OCI-LY7 (cell line): ENCODE measurements at regions of chr6 and their contacts with region 1.

Region 1: GRCh38 chr6:15691250-15691869 is 28.5 kb upstream of the DTNBP1 start:
- DNase-seq: peak; percentile 88
- H3K4me3 ChIP-seq: no peak overlapping the region
- H3K27ac ChIP-seq: no peak overlapping the region
- H3K4me1 ChIP-seq: no peaks in the 10 kb centered on the region
- CTCF ChIP-seq: peak; percentile 99

Region 2: DNA sequence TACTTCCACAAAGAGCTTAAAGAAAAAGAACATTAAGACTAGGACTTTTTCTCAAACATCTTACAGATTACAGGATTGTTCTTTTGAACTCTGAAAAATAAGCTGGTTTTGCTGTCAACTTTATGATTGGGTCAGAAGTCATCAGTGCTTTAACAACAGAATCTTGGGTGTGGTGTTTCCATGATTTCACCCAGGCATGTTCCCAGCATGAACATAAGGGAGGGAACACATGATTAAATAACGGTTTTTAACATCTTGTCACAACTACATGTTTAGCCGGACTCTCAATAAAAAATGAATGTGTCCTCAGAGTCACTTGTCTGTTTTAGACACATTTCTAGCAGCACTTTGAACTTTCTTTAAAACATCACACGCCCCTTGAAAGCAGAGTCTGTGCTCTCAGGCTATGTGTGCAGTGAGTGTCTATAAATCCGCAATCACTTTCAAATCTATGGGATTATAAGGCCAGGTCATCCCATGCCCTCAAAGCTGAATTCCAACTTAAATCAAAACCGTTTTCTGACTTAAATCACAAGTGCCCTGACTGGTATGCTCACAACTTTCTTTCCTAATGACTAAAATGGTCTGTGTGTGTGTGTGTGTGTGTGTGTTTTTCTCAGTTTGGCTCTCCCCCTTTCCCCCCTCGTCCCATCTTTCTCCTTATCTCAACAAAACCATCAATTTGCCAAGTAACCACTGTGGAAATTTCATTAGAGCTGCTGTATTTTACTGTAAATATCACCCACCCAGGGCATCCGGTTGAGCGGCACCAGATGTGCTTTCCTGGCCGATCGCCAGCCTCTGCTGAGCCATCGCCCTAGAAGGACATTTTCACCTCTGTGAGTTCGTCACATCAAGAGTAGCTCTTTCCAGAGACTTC is 188.3 kb after region 1 on chr6:
- CTCF ChIA-PET with region 1: no interaction called
- POLR2A ChIA-PET with region 1: no interaction called
- intact Hi-C with region 1: loop called (anchors 10 kb)
- DNase-seq: peak; percentile 31
- H3K4me3 ChIP-seq: no peak overlapping the region
- H3K27ac ChIP-seq: no peak overlapping the region
- H3K4me1 ChIP-seq: peaks cover 8% of the 10 kb centered on the region
- CTCF ChIP-seq: no peak

Region 3: DNA sequence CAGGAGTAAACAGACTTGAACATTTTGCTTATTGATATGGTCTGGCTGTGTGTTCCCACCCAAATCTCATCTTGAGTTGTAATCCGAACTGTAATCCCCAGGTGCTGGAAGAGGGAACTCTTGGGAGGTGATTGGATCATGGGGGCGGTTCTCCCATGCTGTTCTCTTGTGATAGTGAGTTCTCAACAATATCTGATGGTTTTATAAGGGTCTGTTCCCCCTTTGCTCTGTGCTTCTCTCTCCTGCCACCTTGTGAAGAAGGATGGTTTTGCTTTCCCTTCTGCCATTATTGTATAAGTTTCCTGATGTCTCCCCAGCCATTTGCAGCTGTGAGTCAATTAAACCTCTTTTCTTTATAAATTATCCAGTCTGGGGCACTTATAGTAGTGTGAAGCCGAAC is 477.5 kb after region 1 on chr6:
- CTCF ChIA-PET with region 1: no interaction called
- POLR2A ChIA-PET with region 1: no interaction called
- intact Hi-C with region 1: loop called (anchors 5 kb)
- DNase-seq: peak; percentile 48
- H3K4me3 ChIP-seq: no peak overlapping the region
- H3K27ac ChIP-seq: no peak overlapping the region
- H3K4me1 ChIP-seq: no peaks in the 10 kb centered on the region
- CTCF ChIP-seq: peak; percentile 74

Region 4: DNA sequence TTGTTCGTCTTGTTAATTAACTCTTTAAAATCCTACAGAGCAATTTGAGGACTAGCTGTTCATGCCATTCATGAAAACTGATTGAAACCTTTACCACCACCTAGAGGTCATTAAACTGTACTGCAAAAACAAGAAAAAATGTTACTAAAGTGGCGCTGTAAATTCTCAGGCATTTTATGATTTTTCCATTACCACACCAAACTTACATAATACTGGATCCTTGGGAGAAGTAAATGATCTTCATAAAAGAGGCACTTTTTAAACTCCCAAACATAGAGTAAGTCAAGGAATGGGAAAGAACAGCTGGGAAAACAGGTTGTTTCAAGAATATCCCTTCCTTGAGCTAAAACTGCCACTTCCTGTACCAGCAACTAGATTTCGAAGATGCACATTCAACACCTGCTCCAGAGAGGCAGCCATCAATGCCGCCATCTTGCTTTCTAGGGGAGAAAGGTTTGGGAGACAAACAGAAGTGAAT is 491.9 kb after region 1 on chr6:
- CTCF ChIA-PET with region 1: interaction called, 6 read pairs
- POLR2A ChIA-PET with region 1: interaction called, 4 read pairs
- intact Hi-C with region 1: loop called (anchors 1 kb)
- DNase-seq: peak; percentile 61
- H3K4me3 ChIP-seq: no peak overlapping the region
- H3K27ac ChIP-seq: no peak overlapping the region
- H3K4me1 ChIP-seq: peaks cover 7% of the 10 kb centered on the region
- CTCF ChIP-seq: peak; percentile 86

Region 5: DNA sequence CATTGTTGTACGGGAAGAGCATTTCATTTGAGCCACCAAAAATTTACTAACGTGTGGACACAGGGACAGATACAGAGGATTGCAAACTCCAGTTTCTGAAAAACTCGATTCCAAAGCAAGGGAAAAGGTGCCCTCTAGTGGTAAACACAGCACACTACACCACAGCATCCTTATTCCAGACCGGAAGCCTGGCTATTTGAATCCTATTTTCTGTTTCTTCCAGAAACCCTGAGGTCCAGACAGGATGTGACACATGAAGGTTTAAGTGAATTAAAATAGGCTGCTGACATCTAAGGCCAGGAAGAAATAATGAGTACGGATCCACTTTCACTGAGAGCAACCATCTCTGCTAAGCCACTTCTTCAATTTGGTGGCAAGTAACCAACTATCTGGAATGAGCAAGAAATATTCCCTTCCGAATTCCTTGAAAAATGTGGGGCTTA is 515.3 kb after region 1 on chr6:
- CTCF ChIA-PET with region 1: interaction called, 15 read pairs
- POLR2A ChIA-PET with region 1: interaction called, 11 read pairs
- intact Hi-C with region 1: loop called (anchors 1 kb)
- DNase-seq: peak; percentile 75
- H3K4me3 ChIP-seq: peak overlapping the region; percentile 27
- H3K27ac ChIP-seq: peak overlapping the region; percentile 87
- H3K4me1 ChIP-seq: peaks cover 28% of the 10 kb centered on the region
- CTCF ChIP-seq: peak; percentile 99